CD14-positive monocyte (primary cell): ENCODE measurements at regions of chr19 and their contacts with region 1.

Region 1: GRCh38 chr19:48321622-48322591 is 3.4 kb upstream of the EMP3 start:
- DNase-seq: peak; percentile 98 to 99 (median 99)
- H3K4me3 ChIP-seq: peak overlapping the region; percentile 59 to 89 (median 75)
- H3K4me3 Mint-ChIP-seq: peak overlapping the region; percentile 89 to 93
- H3K27ac ChIP-seq: peak overlapping the region; percentile 94 to 99
- H3K27ac Mint-ChIP-seq: peak overlapping the region; percentile 99 to 100 (median 99)
- H3K4me1 ChIP-seq: peaks cover 53 to 60% of the 10 kb centered on the region in 2 donors
- H3K4me1 Mint-ChIP-seq: peaks cover 53% of the 10 kb centered on the region
- H3K27me3 ChIP-seq: no peaks in the 10 kb centered on the region
- H3K27me3 Mint-ChIP-seq: peaks cover 0 to 3% (median 2%) of the 10 kb centered on the region in 3 donors
- CTCF ChIP-seq: no peak

Region 2: DNA sequence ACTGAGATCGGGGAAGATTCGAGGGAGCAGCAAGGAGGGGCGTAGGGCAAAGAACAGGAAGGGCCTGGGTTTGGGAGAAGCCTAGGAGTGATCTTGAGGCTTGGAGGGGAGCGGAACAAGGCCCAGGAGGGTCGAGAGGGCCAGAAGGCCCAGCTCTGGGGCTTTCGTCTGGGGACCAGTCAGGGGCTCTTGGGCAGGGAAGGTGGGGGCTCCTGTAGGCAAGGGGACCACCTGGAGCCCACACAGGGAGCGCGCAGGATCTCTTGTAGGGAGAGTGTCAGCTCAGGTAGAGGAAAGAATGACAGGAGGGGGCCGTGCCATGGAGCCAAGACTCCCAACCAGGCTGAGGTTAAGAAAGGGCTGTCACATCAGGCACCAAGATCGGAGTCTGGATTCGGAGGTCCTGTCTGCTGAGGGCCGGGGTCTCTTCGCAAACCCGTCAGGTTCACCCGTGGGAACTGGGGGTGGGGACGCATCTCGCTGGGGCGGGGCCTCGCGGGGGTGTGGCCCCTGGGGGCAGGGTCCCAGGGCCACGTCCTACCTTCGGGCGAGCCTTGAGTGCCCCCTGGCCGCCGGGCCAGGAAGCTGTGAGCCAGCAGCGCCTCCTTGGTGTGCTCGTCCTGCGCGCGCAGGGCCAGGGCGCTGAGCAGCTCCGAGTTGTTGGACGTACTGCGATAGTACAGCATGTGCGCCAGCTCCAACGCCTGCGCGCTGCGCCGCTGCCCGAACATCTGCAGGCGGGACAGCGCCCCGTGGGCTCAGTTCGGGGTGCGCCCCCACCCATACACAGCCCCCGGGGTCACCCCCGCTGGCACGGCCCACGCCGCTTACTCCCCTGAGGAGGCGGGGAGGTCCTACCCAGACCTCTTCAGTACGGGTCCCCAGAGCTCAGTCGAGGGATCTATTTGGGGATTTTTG is 11.8 kb after region 1 on chr19:
- intact Hi-C with region 1: loop called (anchors 1 kb)
- DNase-seq: peak; percentile 87 to 93 (median 90)
- H3K4me3 ChIP-seq: peak overlapping the region; percentile 50 to 83 (median 66)
- H3K4me3 Mint-ChIP-seq: peak overlapping the region; percentile 87 to 94
- H3K27ac ChIP-seq: peak overlapping the region; percentile 82 to 91
- H3K27ac Mint-ChIP-seq: peak overlapping the region; percentile 92 to 99 (median 96)
- H3K4me1 ChIP-seq: peaks cover 54 to 56% of the 10 kb centered on the region in 2 donors
- H3K4me1 Mint-ChIP-seq: peaks cover 56% of the 10 kb centered on the region
- H3K27me3 ChIP-seq: no peaks in the 10 kb centered on the region
- H3K27me3 Mint-ChIP-seq: peaks cover 0 to 5% (median 0%) of the 10 kb centered on the region in 3 donors
- CTCF ChIP-seq: peak; percentile 92

Region 3: DNA sequence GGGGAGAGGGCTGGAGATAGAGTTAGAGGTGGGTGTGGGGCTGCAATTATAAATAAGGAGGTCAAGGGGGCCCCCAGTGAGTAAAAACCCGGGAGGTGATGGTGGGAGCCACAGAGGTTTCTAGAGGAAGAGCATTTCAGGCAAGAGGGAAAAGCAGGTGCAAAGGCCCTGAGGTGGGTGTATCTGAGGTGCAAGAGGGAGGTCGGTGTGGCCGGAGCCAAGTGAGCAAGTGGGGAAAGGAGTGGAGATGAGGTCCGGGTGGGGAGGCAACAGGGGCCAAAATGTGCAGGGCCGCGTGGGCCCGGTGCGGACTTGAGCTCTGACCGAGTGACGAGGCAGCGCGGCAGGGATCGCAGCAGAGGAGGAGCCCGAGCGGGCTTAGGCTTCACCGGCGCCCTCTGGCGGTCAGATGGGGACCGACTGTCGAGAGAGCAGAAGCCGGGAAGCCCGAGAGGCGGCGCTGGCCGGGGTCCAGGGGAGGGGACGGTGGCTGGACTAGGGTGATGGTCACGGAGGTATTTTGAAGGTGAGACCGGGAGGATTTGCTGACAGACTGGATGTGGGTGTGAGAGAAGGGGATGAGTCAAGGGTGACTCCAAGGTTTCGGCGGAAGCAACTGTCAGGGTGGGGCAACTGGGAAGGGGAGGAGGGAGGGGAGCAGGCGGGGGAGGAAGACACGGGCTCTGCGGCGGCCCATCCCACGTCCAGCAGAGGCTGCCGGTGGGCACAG is 266.9 kb after region 1 on chr19:
- intact Hi-C with region 1: loop called in 1 of 2 experiments (anchors 10 kb)
- DNase-seq: peak; percentile 83 to 90 (median 85)
- H3K4me3 ChIP-seq: peak overlapping the region; percentile 17 to 72 (median 41)
- H3K4me3 Mint-ChIP-seq: peak overlapping the region; percentile 83 to 96
- H3K27ac ChIP-seq: peak overlapping the region; percentile 56 to 64
- H3K27ac Mint-ChIP-seq: peak overlapping the region; percentile 57 to 92 (median 85)
- H3K4me1 ChIP-seq: peaks cover 13 to 15% of the 10 kb centered on the region in 2 donors
- H3K4me1 Mint-ChIP-seq: peaks cover 17% of the 10 kb centered on the region
- H3K27me3 ChIP-seq: no peaks in the 10 kb centered on the region
- H3K27me3 Mint-ChIP-seq: peaks cover 6 to 9% (median 9%) of the 10 kb centered on the region in 3 donors
- CTCF ChIP-seq: peak; percentile 95

Region 4: GRCh38 chr19:48872182-48872883 is 550.4 kb after region 1 on chr19 and contains the start of gene PPP1R15A:
- intact Hi-C with region 1: loop called in 1 of 2 experiments (anchors 10 kb)
- DNase-seq: peak; percentile 98 to 99 (median 98)
- H3K4me3 ChIP-seq: peak within 1 kb of the TSS; percentile 83 to 100 (median 90)
- H3K4me3 Mint-ChIP-seq: peak within 1 kb of the TSS; percentile 98
- H3K27ac ChIP-seq: peak within 1 kb of the TSS; percentile 99 to 100
- H3K27ac Mint-ChIP-seq: peak within 1 kb of the TSS; percentile 99 to 100 (median 100)
- H3K4me1 ChIP-seq: peaks cover 42% of the 10 kb centered on the region in 2 donors
- H3K4me1 Mint-ChIP-seq: peaks cover 37% of the 10 kb centered on the region
- H3K27me3 ChIP-seq: no peaks in the 10 kb centered on the region
- H3K27me3 Mint-ChIP-seq: peaks cover 4 to 17% (median 6%) of the 10 kb centered on the region in 3 donors
- CTCF ChIP-seq: no peak
- polyA plus RNA-seq, gene PPP1R15A: 127 to 745 (median 169) TPM